Ascending aorta (tissue), 2 donors: ENCODE measurements at regions of chr17 and their contacts with region 1.

Region 1: DNA sequence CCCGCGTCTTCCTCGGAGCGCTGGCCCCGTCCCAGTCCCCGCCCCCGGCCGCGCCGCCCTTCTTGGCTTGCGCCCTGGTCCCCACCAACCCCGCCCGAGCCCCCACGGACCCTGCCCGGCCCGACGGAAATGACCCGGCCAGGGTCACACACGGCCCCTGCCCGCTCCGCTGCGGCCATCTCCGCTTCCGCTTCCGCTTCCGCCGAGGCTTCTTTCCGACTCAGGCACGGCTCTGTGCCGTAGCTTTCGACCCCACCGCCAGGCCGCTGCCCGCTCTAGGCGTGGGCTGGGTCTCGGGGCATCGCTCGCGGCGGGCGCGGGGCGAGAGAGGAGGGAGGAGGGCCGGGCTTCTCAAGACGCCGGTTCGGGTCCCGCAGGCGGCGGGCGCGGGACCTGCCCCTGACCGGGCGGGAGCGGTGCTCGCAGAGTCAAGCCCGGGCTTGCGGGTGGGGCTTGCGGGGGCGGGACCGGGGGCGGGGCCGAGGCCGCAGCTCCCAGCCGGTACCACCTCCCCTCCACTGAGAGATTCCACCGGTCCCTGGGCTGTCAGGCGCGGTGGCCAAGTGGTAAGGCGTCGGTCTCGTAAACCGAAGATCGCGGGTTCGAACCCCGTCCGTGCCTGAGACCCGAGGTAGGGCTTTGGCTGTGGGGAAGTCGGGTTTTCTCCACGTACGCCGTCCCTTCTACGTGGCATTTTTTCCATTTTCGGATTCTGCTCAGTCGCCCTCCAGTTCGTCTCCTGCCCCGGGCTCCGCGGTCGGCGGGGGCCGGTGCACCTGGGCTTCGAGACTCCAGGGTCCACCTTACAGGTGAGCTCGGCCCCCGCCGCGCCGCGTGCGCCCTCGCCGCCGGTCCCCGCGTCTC is 158.3 kb downstream of the RAB11FIP4 start:
- DNase-seq: peak; percentile 73 to 95
- H3K4me3 ChIP-seq: peak overlapping the region; percentile 91 to 93
- H3K27ac ChIP-seq: peak overlapping the region; percentile 95 to 96
- H3K4me1 ChIP-seq: peaks cover 0 to 9% of the 10 kb centered on the region in 2 donors
- H3K27me3 ChIP-seq: no peaks in the 10 kb centered on the region
- CTCF ChIP-seq: no peak

Region 2: GRCh38 chr17:31842183-31843069 is 292.7 kb after region 1 on chr17:
- intact Hi-C with region 1: loop called (anchors 2 kb)
- DNase-seq: peak in 1 of 2 donors; percentile 85
- H3K4me3 ChIP-seq: peak overlapping the region in 1 of 2 donors; percentile 49
- H3K27ac ChIP-seq: peak overlapping the region; percentile 67 to 74
- H3K4me1 ChIP-seq: peaks cover 10 to 24% of the 10 kb centered on the region in 2 donors
- H3K27me3 ChIP-seq: no peaks in the 10 kb centered on the region
- CTCF ChIP-seq: peak; percentile 96 to 99 (median 96)